Right ventricle myocardium inferior (tissue), 1 donor: ENCODE measurements at regions of chr17 and their contacts with region 1.

Region 1: GRCh38 chr17:81833160-81833920 is at the start of gene MCRIP1:
- DNase-seq: peak; percentile 99
- ATAC-seq: peak; percentile 92
- total RNA-seq, gene MCRIP1: 109 TPM

Region 2: DNA sequence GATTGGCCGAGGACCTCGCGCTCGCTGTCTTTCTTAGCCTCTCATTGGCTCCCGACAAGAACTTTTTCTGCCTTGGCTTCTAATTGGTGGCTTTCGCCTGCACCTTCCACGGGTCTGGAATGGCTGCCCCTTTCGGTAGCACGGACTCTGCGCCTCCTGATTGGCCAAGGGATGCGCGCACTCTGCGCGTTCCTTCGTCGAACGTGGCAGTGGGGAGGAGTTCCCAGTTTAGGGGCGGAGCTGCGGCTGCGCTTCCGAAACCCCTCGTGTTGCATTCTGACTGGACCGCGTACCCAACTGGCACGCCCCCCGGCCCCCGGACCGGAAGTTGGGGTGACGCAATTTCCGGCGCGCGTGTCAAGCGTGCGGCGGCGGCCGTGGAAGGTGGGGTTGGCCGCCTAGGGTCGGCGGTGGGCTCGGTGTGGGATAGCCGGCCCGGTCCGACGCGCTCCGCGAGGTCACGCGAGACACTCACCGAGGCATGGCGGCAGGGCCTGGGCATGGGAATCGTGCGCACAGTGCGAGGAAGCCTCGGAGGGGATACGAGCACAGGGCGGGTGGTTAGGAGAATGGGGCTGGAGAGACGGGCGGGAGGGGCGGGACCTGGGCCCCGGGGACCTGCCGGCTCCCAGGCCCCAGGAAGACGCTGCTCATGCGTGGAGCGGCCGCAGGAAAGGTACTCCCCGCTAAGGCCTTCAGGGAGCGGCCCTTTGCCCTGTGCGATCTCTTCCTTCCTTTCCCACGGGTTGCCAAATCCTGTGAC is 27.6 kb after region 1 on chr17:
- intact Hi-C with region 1: loop called (anchors 1 kb)
- DNase-seq: peak; percentile 99
- ATAC-seq: peak; percentile 97